ENCODE measurements at regions of chr6 and their contacts with region 1.

Region 1: GRCh38 chr6:152750694-152751093 is at the start of gene VIP:
- DNase-seq: peak; percentile 75
- H3K4me3 Mint-ChIP-seq: no peak within 1 kb of the TSS
- H3K27ac Mint-ChIP-seq: no peak within 1 kb of the TSS
- H3K4me1 Mint-ChIP-seq: peaks cover 10% of the 10 kb centered on the region
- H3K27me3 Mint-ChIP-seq: peaks cover 51% of the 10 kb centered on the region
- CTCF ChIP-seq: no peak
- total RNA-seq, gene VIP: not detected in 2 replicates

Region 2: DNA sequence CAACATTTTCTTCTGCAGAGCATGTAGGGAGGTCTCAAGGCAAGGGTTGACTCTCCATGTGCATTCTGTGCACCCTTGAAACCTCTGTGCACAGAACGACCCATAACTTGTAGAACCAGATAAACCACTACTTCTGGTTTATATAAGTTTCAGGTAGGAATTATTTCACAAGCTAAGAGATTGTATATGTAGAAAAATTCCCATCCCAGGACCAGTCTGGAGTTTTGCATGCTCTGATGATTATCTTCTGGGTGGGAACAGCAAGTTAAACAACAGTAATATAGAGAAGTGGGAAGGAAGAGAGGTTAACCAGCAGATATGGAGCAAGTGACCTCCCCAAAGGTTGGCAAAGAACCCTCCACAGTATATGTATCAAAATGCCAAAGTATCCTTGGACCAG is 218.1 kb before region 1 on chr6:
- CTCF ChIA-PET with region 1: no interaction called
- POLR2A ChIA-PET with region 1: no interaction called
- intact Hi-C with region 1: no loop called
- DNase-seq: no peak
- H3K4me3 Mint-ChIP-seq: no peak overlapping the region
- H3K27ac Mint-ChIP-seq: no peak overlapping the region
- H3K4me1 Mint-ChIP-seq: no peaks in the 10 kb centered on the region
- H3K27me3 Mint-ChIP-seq: no peaks in the 10 kb centered on the region
- CTCF ChIP-seq: no peak

Region 3: DNA sequence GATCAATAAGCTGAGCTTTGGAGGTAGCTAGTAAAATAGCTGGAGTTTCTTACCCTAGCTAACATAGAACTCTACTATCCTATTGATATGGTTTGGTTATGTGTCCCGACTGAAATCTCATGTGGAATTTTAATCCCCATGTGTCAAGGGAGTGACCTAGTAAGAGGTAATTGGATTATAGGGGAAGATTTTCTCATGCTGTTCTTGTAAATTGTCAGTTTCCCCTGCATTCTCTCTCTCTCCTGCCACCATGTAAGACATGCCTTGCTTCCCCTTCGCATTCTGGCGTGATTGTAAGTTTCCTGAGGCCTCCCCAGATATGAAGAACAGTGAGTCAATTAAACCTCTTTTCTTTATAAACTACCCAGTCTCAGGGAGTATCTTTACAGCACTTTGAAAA is 88.9 kb before region 1 on chr6:
- CTCF ChIA-PET with region 1: no interaction called
- POLR2A ChIA-PET with region 1: no interaction called
- intact Hi-C with region 1: no loop called
- DNase-seq: no peak
- H3K4me3 Mint-ChIP-seq: no peak overlapping the region
- H3K27ac Mint-ChIP-seq: no peak overlapping the region
- H3K4me1 Mint-ChIP-seq: no peaks in the 10 kb centered on the region
- H3K27me3 Mint-ChIP-seq: no peaks in the 10 kb centered on the region
- CTCF ChIP-seq: no peak

Region 4: DNA sequence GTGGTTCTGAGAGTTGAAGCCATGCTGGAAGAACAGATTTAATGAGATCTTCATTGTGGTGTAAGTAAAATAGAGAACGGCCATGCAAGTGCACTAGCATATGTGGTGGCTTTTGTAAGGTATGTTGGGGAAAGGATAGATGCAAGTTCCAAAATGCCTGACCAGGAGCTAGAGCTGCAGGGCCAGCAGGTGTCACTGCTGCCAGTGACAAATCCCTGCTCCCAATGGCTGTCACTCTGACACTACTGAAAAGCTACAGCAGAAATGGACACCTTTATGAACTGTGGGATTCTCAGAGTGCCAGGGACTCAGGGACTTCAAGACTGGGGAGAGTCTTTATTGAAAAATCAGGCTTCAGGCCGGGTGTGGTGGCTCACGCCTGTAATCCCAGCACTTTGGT is 23.2 kb before region 1 on chr6:
- CTCF ChIA-PET with region 1: interaction called, 11 read pairs
- POLR2A ChIA-PET with region 1: no interaction called
- intact Hi-C with region 1: no loop called
- DNase-seq: no peak
- H3K4me3 Mint-ChIP-seq: no peak overlapping the region
- H3K27ac Mint-ChIP-seq: no peak overlapping the region
- H3K4me1 Mint-ChIP-seq: no peaks in the 10 kb centered on the region
- H3K27me3 Mint-ChIP-seq: peaks cover 31% of the 10 kb centered on the region
- CTCF ChIP-seq: no peak

Region 5: GRCh38 chr6:152897799-152898399 is 147.2 kb after region 1 on chr6:
- CTCF ChIA-PET with region 1: interaction called, 4 read pairs
- POLR2A ChIA-PET with region 1: no interaction called
- intact Hi-C with region 1: loop called (anchors 2 kb)
- DNase-seq: peak; percentile 79
- H3K4me3 Mint-ChIP-seq: no peak overlapping the region
- H3K27ac Mint-ChIP-seq: no peak overlapping the region
- H3K4me1 Mint-ChIP-seq: no peaks in the 10 kb centered on the region
- H3K27me3 Mint-ChIP-seq: peaks cover 100% of the 10 kb centered on the region
- CTCF ChIP-seq: peak; percentile 79

Region 6: DNA sequence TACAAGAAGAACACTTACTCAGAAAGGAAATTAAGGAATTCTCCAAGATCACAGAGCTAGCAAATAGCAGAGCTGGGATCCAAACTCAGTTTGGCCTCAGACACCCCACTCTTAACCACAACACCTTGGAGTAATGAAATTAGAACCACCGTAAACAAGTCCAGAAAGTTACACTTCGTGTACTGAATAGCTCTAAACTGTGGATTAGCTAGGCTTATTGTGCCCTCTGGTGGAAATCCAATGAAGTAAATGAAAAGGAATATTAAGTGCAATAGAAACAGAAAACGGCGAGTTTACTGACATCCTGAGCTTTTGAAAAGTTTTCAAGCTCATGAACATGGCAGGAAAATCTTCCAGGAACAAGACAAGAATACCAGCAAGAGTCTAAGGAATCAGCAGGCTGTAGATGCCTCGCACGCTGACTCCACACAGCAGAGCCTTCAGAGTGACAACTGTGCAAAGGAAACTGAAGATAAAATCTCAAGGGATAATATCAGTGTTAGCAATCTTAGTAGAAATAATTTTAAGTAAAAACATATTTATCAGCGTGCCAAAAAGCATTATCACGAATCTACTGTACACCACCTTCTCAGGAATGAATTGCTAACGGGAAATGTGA is 197.6 kb after region 1 on chr6:
- CTCF ChIA-PET with region 1: interaction called, 49 read pairs
- POLR2A ChIA-PET with region 1: interaction called, 3 read pairs
- intact Hi-C with region 1: loop called (anchors 1 kb)
- DNase-seq: peak; percentile 71
- H3K4me3 Mint-ChIP-seq: no peak overlapping the region
- H3K27ac Mint-ChIP-seq: no peak overlapping the region
- H3K4me1 Mint-ChIP-seq: peaks cover 15% of the 10 kb centered on the region
- H3K27me3 Mint-ChIP-seq: peaks cover 19% of the 10 kb centered on the region
- CTCF ChIP-seq: peak; percentile 77

Region 7: DNA sequence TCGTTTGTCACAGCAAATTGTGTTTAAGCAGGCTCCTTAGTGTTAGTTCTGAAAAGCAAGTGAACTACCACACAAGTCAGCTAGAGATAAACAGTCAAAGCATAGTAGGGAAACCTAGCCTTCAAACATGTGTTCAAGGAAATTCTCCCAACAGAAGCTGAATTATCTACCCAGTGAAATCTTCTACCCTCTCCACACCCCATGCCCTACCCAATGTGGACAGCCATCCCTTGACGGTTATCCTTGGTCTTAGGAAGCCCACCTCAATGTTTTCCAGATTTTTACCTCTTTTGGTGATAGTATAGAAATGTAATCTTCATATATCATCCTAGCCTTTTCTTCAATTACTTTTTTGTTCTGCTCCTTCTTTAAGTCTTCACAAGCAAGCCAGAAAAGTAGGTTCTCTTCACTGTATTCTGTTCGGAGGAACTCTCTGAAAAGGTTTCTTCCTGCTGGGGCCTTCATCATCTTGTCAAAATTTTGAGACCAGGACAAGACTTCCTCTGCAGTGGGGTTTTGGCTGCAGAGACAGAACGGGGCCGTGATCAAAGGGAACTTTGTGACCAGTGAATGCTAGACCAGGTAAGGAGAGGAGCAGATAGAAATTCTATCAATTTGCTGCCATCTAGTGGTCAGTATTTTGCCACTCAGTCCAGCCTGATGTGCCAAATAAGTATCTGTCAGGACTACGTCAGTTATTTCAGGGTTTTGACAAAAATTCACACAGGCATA is 273.4 kb after region 1 on chr6:
- CTCF ChIA-PET with region 1: interaction called, 7 read pairs
- POLR2A ChIA-PET with region 1: no interaction called
- intact Hi-C with region 1: loop called (anchors 1 kb)
- DNase-seq: peak; percentile 70
- H3K4me3 Mint-ChIP-seq: no peak overlapping the region
- H3K27ac Mint-ChIP-seq: no peak overlapping the region
- H3K4me1 Mint-ChIP-seq: peaks cover 6% of the 10 kb centered on the region
- H3K27me3 Mint-ChIP-seq: no peaks in the 10 kb centered on the region
- CTCF ChIP-seq: peak; percentile 70

Measured in MCF 10A (cell line).